Activated B cell treated with CpG ODN at 0.5 μM for 24 hours (primary cell): ENCODE measurements at regions of chr9 and their contacts with region 1.

Region 1: GRCh38 chr9:108933718-108934322 is at the start of gene ELP1:
- DNase-seq: peak; percentile 86
- ATAC-seq: peak; percentile 83
- H3K4me3 Mint-ChIP-seq: peak within 1 kb of the TSS; percentile 97
- H3K27ac Mint-ChIP-seq: peak within 1 kb of the TSS; percentile 89
- H3K4me1 Mint-ChIP-seq: peaks cover 23% of the 10 kb centered on the region
- H3K27me3 Mint-ChIP-seq: no peaks in the 10 kb centered on the region
- CTCF ChIP-seq: no peak
- total RNA-seq, gene ELP1: 20.3 and 25.0 TPM in 2 replicates

Region 2: DNA sequence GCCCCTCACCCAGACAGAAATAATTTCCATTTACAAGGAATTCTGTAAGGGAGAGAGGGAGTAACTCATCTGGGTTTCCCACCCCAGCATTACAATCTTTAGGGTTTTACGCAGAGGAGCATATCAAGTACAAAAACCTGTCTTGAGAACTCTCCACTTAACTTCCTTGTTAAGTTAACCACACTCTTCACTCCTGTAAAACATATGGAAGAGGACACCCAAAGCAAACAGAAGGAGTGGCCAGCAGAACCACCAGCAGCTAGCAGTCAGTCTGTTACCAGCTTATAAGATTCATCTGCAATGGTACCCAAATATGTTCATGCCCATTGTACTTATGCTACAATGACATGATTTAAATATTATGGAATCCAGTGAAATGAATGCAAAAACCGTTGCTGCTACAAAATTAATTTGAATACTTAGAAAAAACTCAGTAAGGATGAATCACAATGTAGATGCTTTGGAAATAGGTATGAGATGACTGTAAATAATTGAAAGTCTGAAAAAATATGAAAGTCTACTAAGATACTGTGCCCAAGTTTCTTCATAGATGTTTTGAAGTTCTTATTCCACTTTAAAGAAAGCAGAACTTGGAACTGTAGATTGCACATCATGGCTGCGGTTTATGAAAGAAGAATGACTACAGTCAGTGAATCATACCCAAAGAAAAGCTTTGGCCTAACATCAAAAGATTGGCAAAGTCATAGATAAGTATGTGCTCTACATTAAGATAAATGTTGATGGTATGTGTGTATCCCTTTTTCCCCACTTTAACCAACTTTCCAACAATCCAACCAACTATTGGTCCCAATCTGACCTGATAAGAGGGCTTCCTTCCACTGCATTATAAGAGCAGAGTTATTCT is 311.6 kb before region 1 on chr9:
- CTCF ChIA-PET with region 1: no interaction called
- POLR2A ChIA-PET with region 1: no interaction called
- intact Hi-C with region 1: no loop called
- DNase-seq: no peak
- ATAC-seq: no peak
- H3K4me3 Mint-ChIP-seq: no peak overlapping the region
- H3K27ac Mint-ChIP-seq: no peak overlapping the region
- H3K4me1 Mint-ChIP-seq: no peaks in the 10 kb centered on the region
- H3K27me3 Mint-ChIP-seq: no peaks in the 10 kb centered on the region
- CTCF ChIP-seq: no peak

Region 3: DNA sequence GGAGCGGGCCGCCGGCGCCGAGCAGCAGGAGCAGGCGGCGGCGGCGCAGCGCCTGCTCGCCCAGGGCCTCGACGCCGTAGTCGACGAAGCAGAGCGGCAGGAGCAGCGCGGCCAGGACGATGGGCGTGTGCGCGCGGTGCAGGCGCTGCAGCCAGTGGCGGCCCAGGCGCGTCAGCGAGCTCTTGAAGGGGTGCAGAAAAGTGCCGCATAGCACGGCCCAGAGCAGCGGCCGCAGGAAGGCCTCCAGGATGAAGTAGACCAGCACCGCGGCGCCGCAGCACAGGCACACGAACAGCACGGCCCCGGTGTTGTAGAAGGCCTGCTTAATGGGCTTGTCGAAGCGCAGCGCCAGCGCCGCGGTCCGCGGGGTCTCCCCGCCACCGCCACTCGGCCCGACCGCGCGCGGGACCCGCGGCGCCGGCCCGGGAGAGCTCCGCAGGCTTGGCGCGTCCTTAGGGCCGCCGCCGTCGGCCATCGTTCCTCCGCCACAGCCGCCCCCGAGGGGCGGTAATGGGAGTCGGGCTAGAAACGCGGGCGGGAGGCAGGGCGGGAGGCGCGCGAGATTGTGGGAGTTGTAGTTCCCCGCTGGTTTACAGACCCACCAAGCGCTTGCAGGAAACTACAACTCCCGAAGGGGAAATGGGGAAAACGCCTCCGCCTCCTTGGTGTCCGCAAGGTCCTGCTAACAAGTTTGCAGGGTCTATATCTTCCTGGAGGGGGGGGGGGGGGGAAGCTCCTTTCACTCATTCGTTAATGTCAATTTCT is 185.8 kb after region 1 on chr9 and contains the start of gene TMEM245:
- CTCF ChIA-PET with region 1: no interaction called
- POLR2A ChIA-PET with region 1: interaction called, 5 read pairs
- intact Hi-C with region 1: loop called (anchors 1 kb)
- DNase-seq: peak; percentile 86
- ATAC-seq: peak; percentile 95
- H3K4me3 Mint-ChIP-seq: peak within 1 kb of the TSS; percentile 88
- H3K27ac Mint-ChIP-seq: peak within 1 kb of the TSS; percentile 82
- H3K4me1 Mint-ChIP-seq: peaks cover 36% of the 10 kb centered on the region
- H3K27me3 Mint-ChIP-seq: no peaks in the 10 kb centered on the region
- CTCF ChIP-seq: no peak
- total RNA-seq, gene TMEM245: 16.1 and 20.6 TPM in 2 replicates